Activated CD8-positive, alpha-beta T cell treated with anti-CD3 and anti-CD28 coated beads for 36 hours (primary cell): ENCODE measurements at regions of chr4 and their contacts with region 1.

Region 1: GRCh38 chr4:183261953-183262775 is 57.9 kb downstream of the CLDN22 start:
- DNase-seq: peak; percentile 89
- ATAC-seq: peak; percentile 98
- H3K4me3 Mint-ChIP-seq: no peak overlapping the region
- H3K27ac Mint-ChIP-seq: peak overlapping the region; percentile 28
- H3K4me1 Mint-ChIP-seq: peaks cover 3% of the 10 kb centered on the region
- H3K27me3 Mint-ChIP-seq: no peaks in the 10 kb centered on the region
- CTCF ChIP-seq: peak; percentile 82

Region 2: DNA sequence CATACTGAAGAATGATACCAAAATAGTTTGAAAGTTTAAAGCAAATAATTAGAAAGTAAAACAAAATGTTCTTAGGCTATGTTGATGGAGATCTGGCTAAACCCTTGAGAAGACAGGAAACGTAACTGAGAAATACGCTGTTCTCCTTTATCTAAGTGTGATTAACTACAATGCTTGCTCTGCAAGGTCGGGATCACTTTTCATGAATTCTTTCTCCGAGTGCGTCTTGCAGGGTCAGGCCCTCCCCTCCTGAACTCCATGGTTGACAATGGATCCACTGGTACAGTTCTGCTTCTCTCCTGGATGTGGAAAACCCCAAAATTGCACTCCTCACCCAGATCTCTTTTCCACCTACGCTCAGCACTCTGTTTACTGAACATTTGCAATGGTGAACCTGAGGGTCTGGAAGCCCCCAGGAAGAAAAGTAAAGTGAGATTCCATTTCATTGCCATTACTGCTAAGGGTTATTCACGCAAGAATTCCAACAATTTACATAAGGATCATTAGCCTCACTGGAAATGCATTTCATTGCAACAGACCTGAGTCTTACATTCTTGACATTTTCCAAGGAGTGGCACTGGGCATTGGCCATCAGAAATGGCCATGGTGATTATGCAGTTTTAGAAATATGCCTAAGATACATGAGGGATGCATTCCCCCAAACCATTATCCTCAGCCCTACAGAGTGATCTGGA is 187.7 kb before region 1 on chr4:
- CTCF ChIA-PET with region 1: interaction called, 84 read pairs
- POLR2A ChIA-PET with region 1: interaction called, 4 read pairs
- intact Hi-C with region 1: loop called (anchors 1 kb)
- DNase-seq: no peak
- ATAC-seq: no peak
- H3K4me3 Mint-ChIP-seq: no peak overlapping the region
- H3K27ac Mint-ChIP-seq: no peak overlapping the region
- H3K4me1 Mint-ChIP-seq: no peaks in the 10 kb centered on the region
- H3K27me3 Mint-ChIP-seq: peaks cover 9% of the 10 kb centered on the region
- CTCF ChIP-seq: no peak

Region 3: GRCh38 chr4:183098019-183098722 is 164.0 kb before region 1 on chr4:
- CTCF ChIA-PET with region 1: interaction called, 10 read pairs
- POLR2A ChIA-PET with region 1: no interaction called
- intact Hi-C with region 1: no loop called
- DNase-seq: peak; percentile 13
- ATAC-seq: peak; percentile 41
- H3K4me3 Mint-ChIP-seq: peak overlapping the region; percentile 36
- H3K27ac Mint-ChIP-seq: no peak overlapping the region
- H3K4me1 Mint-ChIP-seq: peaks cover 6% of the 10 kb centered on the region
- H3K27me3 Mint-ChIP-seq: peaks cover 47% of the 10 kb centered on the region
- CTCF ChIP-seq: no peak

Region 4: GRCh38 chr4:183284965-183285364 is 22.8 kb after region 1 on chr4:
- CTCF ChIA-PET with region 1: interaction called, 11 read pairs
- POLR2A ChIA-PET with region 1: no interaction called
- intact Hi-C with region 1: no loop called
- DNase-seq: no peak
- ATAC-seq: no peak
- H3K4me3 Mint-ChIP-seq: no peak overlapping the region
- H3K27ac Mint-ChIP-seq: no peak overlapping the region
- H3K4me1 Mint-ChIP-seq: no peaks in the 10 kb centered on the region
- H3K27me3 Mint-ChIP-seq: peaks cover 3% of the 10 kb centered on the region
- CTCF ChIP-seq: no peak

Region 5: GRCh38 chr4:183335369-183335940 is 73.3 kb after region 1 on chr4:
- CTCF ChIA-PET with region 1: no interaction called
- POLR2A ChIA-PET with region 1: no interaction called
- intact Hi-C with region 1: no loop called
- DNase-seq: peak; percentile 19
- ATAC-seq: peak; percentile 72
- H3K4me3 Mint-ChIP-seq: no peak overlapping the region
- H3K27ac Mint-ChIP-seq: no peak overlapping the region
- H3K4me1 Mint-ChIP-seq: peaks cover 7% of the 10 kb centered on the region
- H3K27me3 Mint-ChIP-seq: peaks cover 18% of the 10 kb centered on the region
- CTCF ChIP-seq: no peak